ENCODE measurements at regions of chr9 and their contacts with region 1.

Region 1: GRCh38 chr9:21506626-21507484 is 24.7 kb upstream of the IFNE start:
- DNase-seq: peak; percentile 79
- H3K4me3 ChIP-seq: no peak overlapping the region
- H3K27ac ChIP-seq: peak overlapping the region; percentile 19
- H3K4me1 ChIP-seq: peaks cover 29% of the 10 kb centered on the region
- H3K27me3 ChIP-seq: no peaks in the 10 kb centered on the region
- CTCF ChIP-seq: no peak
- POLR2A ChIP-seq: no peak

Region 2: DNA sequence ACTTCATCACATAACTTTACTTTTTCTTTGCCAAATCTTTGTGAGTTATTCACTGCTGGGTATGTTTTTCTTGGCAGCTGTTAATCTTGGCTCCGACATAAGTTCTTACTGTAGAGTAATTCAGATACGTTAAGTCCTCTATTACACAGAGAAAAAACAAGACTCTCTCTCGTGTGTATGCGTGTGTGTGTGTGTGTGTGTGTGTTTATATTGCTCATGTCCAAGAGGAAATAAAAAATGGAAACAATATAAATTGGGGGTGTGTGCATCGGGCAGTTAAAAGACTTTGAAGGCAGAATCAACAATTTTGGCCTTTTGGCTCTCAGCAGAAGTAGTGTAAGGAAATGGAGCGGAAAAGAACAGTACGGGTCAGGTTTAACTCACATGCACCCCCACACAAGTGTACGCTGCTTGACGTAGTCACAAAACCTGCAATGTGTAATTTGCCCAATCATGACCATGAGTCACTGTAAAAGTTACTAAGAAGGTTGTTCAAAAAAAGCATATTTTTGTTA is 42.5 kb after region 1 on chr9:
- CTCF ChIA-PET with region 1: no interaction called
- POLR2A ChIA-PET with region 1: no interaction called
- dilution Hi-C with region 1: no loop called
- intact Hi-C with region 1: loop called (anchors 1 kb)
- DNase-seq: peak; percentile 100
- H3K4me3 ChIP-seq: no peak overlapping the region
- H3K27ac ChIP-seq: peak overlapping the region; percentile 92
- H3K4me1 ChIP-seq: peaks cover 61% of the 10 kb centered on the region
- H3K27me3 ChIP-seq: no peaks in the 10 kb centered on the region
- CTCF ChIP-seq: no peak
- POLR2A ChIP-seq: peak; percentile 57

Measured in endothelial cell of umbilical vein (primary cell).